HCT116 (cell line): ENCODE measurements at regions of chr7 and their contacts with region 1.

Region 1: DNA sequence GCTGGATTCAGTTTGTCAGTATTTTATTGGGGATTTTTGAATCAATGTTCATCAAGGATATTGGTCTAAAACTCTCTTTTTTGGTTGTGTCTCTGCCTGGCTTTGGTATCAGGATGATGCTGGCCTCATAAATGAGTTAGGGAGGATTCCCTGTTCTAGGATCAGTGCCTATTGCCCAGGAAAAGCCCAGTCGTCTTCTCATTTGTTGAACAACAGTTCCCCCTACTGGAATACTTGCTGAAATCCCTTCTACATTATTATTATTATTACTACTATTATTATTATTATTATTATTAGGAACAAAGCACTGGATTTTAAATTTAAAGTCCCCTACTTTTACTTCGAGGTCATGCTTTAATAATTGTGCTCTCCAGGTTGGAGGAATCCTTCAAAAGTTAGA is 528.9 kb downstream of the MAGI2 start:
- DNase-seq: peak; percentile 15
- ATAC-seq: no peak
- H3K4me3 ChIP-seq: no peak overlapping the region
- H3K27ac ChIP-seq: no peak overlapping the region
- H3K4me1 ChIP-seq: no peaks in the 10 kb centered on the region
- H3K27me3 ChIP-seq: no peaks in the 10 kb centered on the region
- CTCF ChIP-seq: peak in 2 of 3 experiments; percentile 22 to 35; a peak in 1 of 6 replicates
- POLR2A ChIP-seq: no peak
- RAD21 ChIP-seq: peak; percentile 61

Region 2: DNA sequence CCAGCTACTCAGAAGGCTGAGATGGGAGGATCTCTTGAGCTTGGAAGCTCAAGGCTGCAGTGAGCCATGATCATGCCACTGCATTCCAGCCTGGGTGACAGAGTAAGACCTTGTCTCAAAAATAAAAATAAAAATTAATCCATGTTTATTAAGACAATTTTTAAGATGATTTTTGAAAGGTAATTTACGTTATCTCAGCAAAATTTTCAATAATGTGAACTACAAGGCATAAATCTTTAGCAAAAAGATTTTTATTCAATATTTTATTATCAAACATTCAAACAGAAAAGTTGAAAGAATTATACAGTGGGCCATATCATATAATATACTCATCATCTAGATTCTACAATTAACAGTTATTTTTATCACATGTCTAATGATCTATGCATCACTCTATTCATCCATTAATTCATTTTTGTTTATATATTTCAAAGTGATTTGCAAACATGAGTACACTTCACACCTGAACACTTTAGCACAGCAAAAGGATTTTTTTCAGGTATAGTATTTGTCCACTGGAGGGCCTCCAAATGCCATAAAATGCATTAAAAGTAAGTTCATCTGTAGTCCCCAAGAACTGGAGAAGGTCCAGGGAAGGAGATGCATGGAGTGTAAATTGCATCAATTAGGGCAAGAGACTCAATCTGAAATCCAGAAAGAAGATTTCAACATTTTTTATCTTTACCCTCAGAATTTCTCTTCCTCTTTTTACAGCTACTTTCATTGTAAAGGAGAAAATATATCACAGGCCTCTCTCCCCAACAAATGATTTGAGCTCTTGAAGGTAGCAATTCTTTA is 1267.0 kb before region 1 on chr7:
- CTCF ChIA-PET with region 1: no interaction called
- POLR2A ChIA-PET with region 1: no interaction called
- RAD21 ChIA-PET with region 1: no interaction called
- intact Hi-C with region 1: loop called (anchors 10 kb)
- DNase-seq: peak; percentile 35
- ATAC-seq: peak; percentile 78
- H3K4me3 ChIP-seq: no peak overlapping the region
- H3K27ac ChIP-seq: no peak overlapping the region
- H3K4me1 ChIP-seq: no peaks in the 10 kb centered on the region
- H3K27me3 ChIP-seq: no peaks in the 10 kb centered on the region
- CTCF ChIP-seq: peak; percentile 43 to 75 (median 58); a peak in 5 of 6 replicates
- POLR2A ChIP-seq: no peak
- RAD21 ChIP-seq: peak; percentile 85

Region 3: GRCh38 chr7:78134256-78134655 is 790.3 kb before region 1 on chr7:
- CTCF ChIA-PET with region 1: no interaction called
- POLR2A ChIA-PET with region 1: no interaction called
- RAD21 ChIA-PET with region 1: no interaction called
- intact Hi-C with region 1: loop called (anchors 10 kb)
- DNase-seq: peak; percentile 19
- ATAC-seq: peak; percentile 73
- H3K4me3 ChIP-seq: no peak overlapping the region
- H3K27ac ChIP-seq: no peak overlapping the region
- H3K4me1 ChIP-seq: no peaks in the 10 kb centered on the region
- H3K27me3 ChIP-seq: peaks cover 21% of the 10 kb centered on the region
- CTCF ChIP-seq: peak; percentile 32 to 66 (median 51); a peak in 5 of 6 replicates
- POLR2A ChIP-seq: no peak
- RAD21 ChIP-seq: peak; percentile 62

Region 4: DNA sequence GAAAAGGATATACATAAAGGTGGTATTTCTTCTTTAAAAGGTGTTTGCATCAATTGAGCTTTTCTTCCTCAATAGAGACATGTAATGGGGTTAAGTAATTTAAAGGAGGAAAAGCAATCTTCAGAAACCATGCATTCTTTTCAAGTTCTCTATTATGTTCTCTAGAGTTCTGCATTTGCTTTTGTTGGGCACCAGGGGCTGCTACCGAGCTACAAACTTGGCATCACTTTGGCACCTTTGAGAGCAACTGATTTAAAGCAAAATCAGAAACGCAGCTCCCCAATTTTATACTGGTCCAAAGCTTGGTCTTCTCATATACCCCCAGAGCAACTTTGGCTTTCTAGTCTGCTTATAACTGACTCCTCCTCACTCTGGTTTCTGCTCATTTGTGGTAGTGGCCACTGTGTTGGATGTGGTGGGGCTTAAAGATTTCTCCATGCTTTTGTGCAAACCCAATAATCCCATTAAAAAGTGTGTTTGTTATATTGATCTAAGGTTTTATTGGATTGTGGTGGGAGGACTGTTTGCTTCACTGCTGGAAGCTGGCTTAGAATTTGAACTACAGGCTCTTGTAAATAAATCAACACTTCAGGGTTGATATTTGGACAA is 413.9 kb before region 1 on chr7:
- CTCF ChIA-PET with region 1: no interaction called
- POLR2A ChIA-PET with region 1: no interaction called
- RAD21 ChIA-PET with region 1: no interaction called
- intact Hi-C with region 1: loop called (anchors 2 kb)
- DNase-seq: peak; percentile 8
- ATAC-seq: peak; percentile 75
- H3K4me3 ChIP-seq: no peak overlapping the region
- H3K27ac ChIP-seq: no peak overlapping the region
- H3K4me1 ChIP-seq: no peaks in the 10 kb centered on the region
- H3K27me3 ChIP-seq: no peaks in the 10 kb centered on the region
- CTCF ChIP-seq: peak in 2 of 3 experiments; percentile 70 to 71; a peak in 4 of 6 replicates
- POLR2A ChIP-seq: no peak
- RAD21 ChIP-seq: peak; percentile 68

Region 5: DNA sequence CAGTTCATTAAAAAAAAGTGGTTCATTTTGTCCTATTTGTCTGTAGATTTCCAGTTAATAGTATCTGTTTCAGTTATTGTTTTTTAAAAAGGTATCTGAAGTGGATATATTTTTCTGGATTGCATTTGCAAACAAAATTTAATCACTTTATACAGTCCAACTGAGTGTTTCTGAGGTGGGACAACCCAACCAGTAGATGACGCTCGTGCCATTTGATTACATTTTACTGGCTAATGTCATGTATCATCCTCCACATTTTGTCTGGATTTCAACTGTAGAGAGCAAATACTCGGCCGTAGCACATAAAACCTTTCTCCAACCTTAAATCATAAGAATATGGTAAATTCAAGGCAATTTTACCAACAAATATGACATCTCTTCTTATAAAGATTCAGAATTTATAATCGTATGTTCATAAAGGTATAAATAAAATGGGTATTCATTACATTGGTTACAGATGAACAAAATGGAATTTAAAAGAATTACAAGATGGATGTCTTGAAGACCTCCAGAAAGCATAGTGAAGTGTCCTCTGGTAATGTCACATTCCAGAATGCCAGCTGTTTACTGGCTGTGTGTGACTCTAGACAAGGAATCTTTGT is 337.0 kb before region 1 on chr7:
- CTCF ChIA-PET with region 1: interaction called, 3 read pairs
- POLR2A ChIA-PET with region 1: no interaction called
- RAD21 ChIA-PET with region 1: no interaction called
- intact Hi-C with region 1: loop called (anchors 1 kb)
- DNase-seq: peak; percentile 6
- ATAC-seq: peak; percentile 67
- H3K4me3 ChIP-seq: no peak overlapping the region
- H3K27ac ChIP-seq: no peak overlapping the region
- H3K4me1 ChIP-seq: no peaks in the 10 kb centered on the region
- H3K27me3 ChIP-seq: 0 out of 2 replicates have a peak, but pooled peaks cover 3% of the 10 kb centered on the region
- CTCF ChIP-seq: peak; percentile 54 to 79 (median 55); a peak in 4 of 6 replicates
- POLR2A ChIP-seq: no peak
- RAD21 ChIP-seq: peak; percentile 74

Region 6: DNA sequence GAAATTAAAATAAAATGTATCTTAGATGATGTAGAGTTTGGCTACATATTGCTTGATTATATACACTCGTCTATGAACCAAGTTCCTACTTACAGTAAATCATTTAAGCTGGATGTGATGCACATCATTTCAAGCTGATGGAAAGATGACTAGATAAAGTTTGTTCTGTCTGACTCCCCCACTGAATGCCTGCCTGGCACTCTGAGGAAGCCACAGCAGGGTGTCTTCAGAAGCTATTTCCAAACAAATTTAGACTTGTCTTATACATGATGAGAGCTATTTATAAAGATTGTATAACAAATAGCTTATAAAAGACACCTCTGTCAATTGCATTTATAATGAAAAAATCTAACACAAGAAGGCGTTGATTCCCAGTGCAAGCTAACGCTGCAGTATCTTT is 212.5 kb before region 1 on chr7:
- CTCF ChIA-PET with region 1: no interaction called
- POLR2A ChIA-PET with region 1: no interaction called
- RAD21 ChIA-PET with region 1: no interaction called
- intact Hi-C with region 1: no loop called
- DNase-seq: no peak
- ATAC-seq: no peak
- H3K4me3 ChIP-seq: no peak overlapping the region
- H3K27ac ChIP-seq: no peak overlapping the region
- H3K4me1 ChIP-seq: no peaks in the 10 kb centered on the region
- H3K27me3 ChIP-seq: no peaks in the 10 kb centered on the region
- CTCF ChIP-seq: no peak
- POLR2A ChIP-seq: no peak
- RAD21 ChIP-seq: no peak

Region 7: GRCh38 chr7:78900806-78901205 is 23.8 kb before region 1 on chr7:
- CTCF ChIA-PET with region 1: no interaction called
- POLR2A ChIA-PET with region 1: no interaction called
- RAD21 ChIA-PET with region 1: no interaction called
- intact Hi-C with region 1: no loop called
- DNase-seq: no peak
- ATAC-seq: no peak
- H3K4me3 ChIP-seq: no peak overlapping the region
- H3K27ac ChIP-seq: no peak overlapping the region
- H3K4me1 ChIP-seq: no peaks in the 10 kb centered on the region
- H3K27me3 ChIP-seq: no peaks in the 10 kb centered on the region
- CTCF ChIP-seq: no peak
- POLR2A ChIP-seq: no peak
- RAD21 ChIP-seq: no peak

Region 8: DNA sequence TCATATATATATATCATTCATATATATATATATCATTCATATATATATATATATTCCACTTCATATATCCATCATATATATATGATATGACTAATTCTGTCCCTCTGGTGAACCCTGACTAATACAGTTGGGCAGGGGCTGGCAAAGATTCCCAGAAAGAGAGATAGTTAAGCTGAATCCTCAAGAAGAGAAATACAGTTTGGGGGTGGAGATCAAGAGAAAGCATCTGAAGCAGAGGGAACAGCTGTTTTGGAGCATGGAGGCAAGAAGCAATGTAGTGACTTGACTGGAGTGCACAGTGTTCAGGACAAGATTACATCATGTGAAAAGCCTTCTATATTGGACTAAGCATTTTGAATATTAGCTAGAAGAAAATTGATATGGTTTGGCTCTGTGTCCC is 11.8 kb before region 1 on chr7:
- CTCF ChIA-PET with region 1: no interaction called
- POLR2A ChIA-PET with region 1: no interaction called
- RAD21 ChIA-PET with region 1: no interaction called
- intact Hi-C with region 1: no loop called
- DNase-seq: no peak
- ATAC-seq: no peak
- H3K4me3 ChIP-seq: no peak overlapping the region
- H3K27ac ChIP-seq: no peak overlapping the region
- H3K4me1 ChIP-seq: no peaks in the 10 kb centered on the region
- H3K27me3 ChIP-seq: no peaks in the 10 kb centered on the region
- CTCF ChIP-seq: no peak
- POLR2A ChIP-seq: no peak
- RAD21 ChIP-seq: no peak